Activated naive CD4-positive, alpha-beta T cell treated with anti-CD3 and anti-CD28 coated beads, Interleukin-2, amount 10 ng/mL, durations not matched to agents 7 days and 5 days (primary cell): ENCODE measurements at regions of chr11 and their contacts with region 1.

Region 1: DNA sequence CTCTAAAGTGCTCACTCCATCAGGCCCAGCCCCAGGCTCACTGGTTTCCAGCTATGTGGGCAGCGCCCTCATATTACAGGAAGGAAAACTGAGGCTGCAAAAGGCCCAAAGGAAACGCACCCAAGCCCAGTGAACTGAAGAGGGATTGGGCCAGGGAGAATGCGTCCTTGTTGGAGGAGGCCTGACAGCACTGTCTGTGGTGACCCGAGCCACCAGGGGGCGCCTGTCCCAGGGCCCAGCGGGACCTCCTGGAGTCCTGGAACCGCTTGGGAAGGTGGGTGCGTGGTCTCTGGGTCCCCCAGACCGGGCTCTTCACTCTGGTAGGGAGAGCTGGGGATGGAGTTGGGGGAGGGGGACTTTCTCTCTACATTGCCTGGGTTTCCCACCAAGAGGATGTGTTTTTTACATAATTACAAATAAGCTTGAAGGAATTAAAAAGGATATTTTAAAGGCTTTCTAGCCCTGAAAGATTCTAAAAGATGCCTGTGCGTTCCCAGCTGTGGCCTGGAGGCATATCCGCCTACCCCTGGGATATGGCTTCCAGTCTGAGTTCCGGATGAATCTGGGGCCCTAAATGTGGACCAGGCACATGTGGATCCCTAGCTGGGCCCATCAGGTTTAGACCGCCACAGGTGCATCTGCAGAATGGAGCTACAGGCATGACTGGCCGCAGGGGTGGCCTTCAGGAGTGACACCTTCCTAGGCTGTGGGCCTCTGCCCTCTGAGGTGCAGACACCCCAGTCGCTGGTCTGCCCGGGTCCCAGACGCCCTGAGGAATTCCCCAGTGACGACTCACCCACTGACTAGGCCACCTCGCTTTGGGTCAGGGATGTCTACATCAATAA is 4.2 kb downstream of the SPI1 start:
- DNase-seq: peak; percentile 88
- H3K4me3 Mint-ChIP-seq: no peak overlapping the region
- H3K27ac Mint-ChIP-seq: no peak overlapping the region
- H3K4me1 Mint-ChIP-seq: peaks cover 2% of the 10 kb centered on the region
- H3K27me3 Mint-ChIP-seq: peaks cover 4% of the 10 kb centered on the region

Region 2: DNA sequence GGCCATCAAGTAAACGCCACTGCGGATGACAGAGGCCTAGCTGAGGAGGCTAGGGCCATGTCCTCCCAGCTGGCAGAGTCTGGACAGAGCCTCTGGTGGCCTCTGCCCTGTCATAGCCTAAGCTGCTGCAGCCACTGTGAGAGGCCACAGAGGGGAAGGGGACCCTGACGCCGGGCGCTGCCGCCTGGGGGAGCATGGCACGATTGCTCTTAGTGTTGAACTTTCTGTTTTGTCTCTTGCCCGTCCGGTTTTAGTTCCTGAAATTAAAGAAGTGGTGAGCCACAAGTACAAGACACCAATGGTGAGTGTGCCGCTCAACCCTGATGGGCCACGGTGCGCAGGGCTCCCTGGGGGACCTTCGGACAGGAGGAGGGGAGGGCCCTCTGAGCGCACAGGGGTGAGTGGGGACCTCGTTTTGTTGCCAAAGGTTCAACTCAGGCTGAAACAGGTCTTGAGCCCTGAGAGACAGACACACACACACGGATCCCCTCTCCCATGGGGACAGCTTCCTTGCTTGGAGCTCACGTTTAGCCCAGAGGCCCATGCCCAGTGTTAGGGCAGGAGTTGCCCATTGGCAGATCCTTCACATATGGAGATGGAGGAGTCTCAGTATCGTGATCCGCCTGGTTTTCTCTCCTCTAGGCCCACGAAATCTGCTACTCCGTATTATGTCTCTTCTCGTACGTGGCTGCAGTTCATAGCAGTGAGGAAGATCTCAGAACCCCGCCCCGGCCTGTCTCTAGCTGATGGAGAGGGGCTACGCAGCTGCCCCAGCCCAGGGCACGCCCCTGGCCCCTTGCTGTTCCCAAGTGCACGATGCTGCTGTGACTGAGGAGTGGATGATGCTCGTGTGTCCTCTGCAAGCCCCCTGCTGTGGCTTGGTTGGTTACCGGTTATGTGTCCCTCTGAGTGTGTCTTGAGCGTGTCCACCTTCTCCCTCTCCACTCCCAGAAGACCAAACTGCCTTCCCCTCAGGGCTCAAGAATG is 45.4 kb before region 1 on chr11:
- CTCF ChIA-PET with region 1: no interaction called
- DNase-seq: no peak
- H3K4me3 Mint-ChIP-seq: no peak overlapping the region
- H3K27ac Mint-ChIP-seq: peak overlapping the region; percentile 63
- H3K4me1 Mint-ChIP-seq: no peaks in the 10 kb centered on the region
- H3K27me3 Mint-ChIP-seq: no peaks in the 10 kb centered on the region

Region 3: DNA sequence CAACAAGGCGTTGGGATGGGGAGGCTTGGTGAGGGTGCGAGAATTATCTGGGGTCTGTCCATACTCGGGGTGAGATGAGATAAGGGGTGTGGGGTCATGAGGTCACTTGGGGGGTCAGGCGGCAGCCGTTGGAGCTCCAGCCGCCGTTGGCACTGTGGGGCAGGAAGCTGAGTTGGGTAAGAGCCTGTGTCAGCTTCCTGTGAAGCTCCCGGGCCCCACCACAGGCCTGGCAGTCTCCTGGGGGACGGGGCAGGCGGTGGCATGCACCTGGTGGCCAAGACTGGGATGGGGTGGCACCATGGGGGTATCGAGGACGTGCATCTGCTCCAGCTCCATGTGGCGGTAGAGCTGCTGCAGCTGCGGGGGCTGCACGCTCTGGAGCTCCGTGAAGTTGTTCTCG is 14.5 kb before region 1 on chr11:
- CTCF ChIA-PET with region 1: interaction called, 13 read pairs
- DNase-seq: no peak
- H3K4me3 Mint-ChIP-seq: no peak overlapping the region
- H3K27ac Mint-ChIP-seq: no peak overlapping the region
- H3K4me1 Mint-ChIP-seq: peaks cover 12% of the 10 kb centered on the region
- H3K27me3 Mint-ChIP-seq: peaks cover 4% of the 10 kb centered on the region

Region 4: GRCh38 chr11:47393150-47394049 is 19.3 kb after region 1 on chr11:
- CTCF ChIA-PET with region 1: interaction called, 31 read pairs
- DNase-seq: no peak
- H3K4me3 Mint-ChIP-seq: no peak overlapping the region
- H3K27ac Mint-ChIP-seq: peak overlapping the region; percentile 94
- H3K4me1 Mint-ChIP-seq: peaks cover 64% of the 10 kb centered on the region
- H3K27me3 Mint-ChIP-seq: peaks cover 7% of the 10 kb centered on the region

Region 5: GRCh38 chr11:47407746-47408590 is 33.9 kb after region 1 on chr11 and contains the start of gene SLC39A13:
- CTCF ChIA-PET with region 1: interaction called, 133 read pairs
- DNase-seq: peak; percentile 92
- H3K4me3 Mint-ChIP-seq: peak within 1 kb of the TSS; percentile 92
- H3K27ac Mint-ChIP-seq: peak within 1 kb of the TSS; percentile 90
- H3K4me1 Mint-ChIP-seq: peaks cover 30% of the 10 kb centered on the region
- H3K27me3 Mint-ChIP-seq: peaks cover 8% of the 10 kb centered on the region

Region 6: DNA sequence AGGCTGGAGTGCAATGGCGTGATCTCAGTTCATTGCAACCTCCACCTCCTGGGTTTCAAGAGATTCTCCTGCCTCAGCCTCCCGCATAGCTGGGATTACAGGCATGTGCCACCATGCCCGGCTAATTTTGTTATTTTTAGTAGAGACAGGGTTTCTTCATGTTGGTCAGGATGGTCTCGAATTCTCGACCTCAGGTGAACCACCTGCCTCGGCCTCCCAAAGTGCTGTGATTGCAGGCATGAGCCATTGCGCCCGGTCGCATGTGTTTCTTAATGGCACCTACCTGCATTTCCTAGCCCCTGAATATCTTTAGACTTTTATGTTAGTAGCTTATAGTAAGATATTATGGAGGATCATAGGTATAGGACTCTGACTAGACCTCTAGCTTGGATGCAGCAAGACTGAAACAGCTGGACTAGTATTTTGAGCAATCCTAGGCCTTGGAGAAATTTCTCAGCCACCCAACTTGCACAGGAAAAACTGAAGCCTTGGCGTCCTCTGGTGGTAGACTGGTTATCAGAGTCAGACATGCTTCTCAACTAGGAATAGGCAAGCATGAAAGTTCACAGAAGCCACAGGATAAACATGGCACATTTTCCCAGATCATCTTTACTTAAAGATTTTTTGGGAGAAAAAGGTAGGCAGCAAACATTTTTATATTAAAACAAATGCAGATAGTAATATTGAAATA is 242.8 kb after region 1 on chr11:
- CTCF ChIA-PET with region 1: interaction called, 10 read pairs
- DNase-seq: peak; percentile 53
- H3K4me3 Mint-ChIP-seq: no peak overlapping the region
- H3K27ac Mint-ChIP-seq: no peak overlapping the region
- H3K4me1 Mint-ChIP-seq: no peaks in the 10 kb centered on the region
- H3K27me3 Mint-ChIP-seq: no peaks in the 10 kb centered on the region